ENCODE measurements at regions of chr2 and their contacts with region 1.

Region 1: DNA sequence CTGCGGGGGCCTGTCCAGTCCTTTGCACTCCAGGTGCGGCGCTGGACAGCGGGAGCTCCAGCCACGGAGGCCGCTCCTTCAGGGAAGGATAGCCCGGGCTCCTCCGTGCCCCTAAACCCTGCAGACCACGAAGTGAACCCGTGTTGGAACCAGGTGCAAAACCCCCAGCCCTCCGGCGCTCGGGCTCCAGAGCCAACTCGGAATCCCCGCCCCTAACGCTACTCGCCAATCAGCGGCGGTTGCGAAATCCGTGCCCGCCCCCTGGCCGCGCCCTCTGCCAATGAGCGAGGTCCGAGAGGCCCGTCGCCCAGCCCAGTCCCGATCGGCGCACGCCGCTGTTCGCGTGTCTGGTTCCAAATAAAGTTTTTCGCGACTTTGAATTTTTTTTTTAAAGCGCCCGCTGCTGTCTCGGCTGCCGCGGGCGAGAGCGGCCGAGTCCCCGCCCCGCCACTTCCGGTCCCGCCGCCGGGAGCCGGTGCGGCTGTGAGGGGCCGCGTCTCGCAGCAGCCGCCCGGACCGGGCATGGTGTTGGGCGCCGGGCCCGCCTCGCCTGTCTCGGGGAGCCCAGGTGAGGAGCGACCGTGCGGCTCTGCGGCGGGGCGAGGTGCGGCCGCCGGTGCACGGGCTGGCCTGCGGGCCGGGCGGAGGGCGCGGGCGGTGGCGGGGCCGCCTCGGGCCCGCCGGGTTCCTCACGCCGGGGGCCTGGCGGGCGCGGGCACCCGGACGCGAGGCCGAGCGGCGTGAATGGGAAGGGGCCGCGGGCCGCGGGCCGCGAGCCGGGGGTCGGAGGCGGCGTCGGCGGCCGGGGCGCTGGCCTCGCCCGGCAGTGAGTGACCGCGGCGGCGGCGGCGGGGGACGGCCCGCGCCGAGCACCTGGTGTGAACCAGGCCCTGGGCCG is at the start of gene UBE2F:
- DNase-seq: peak; percentile 95 to 97 (median 97)
- H3K4me3 ChIP-seq: peak within 1 kb of the TSS; percentile 58 to 77
- H3K4me3 Mint-ChIP-seq: peak within 1 kb of the TSS; percentile 84 to 92 (median 87)
- H3K27ac ChIP-seq: peak within 1 kb of the TSS; percentile 61
- H3K27ac Mint-ChIP-seq: peak within 1 kb of the TSS; percentile 81 to 96 (median 91)
- H3K4me1 ChIP-seq: peaks cover 40% of the 10 kb centered on the region
- H3K4me1 Mint-ChIP-seq: peaks cover 32 to 52% (median 42%) of the 10 kb centered on the region in 4 donors
- H3K27me3 ChIP-seq: no peaks in the 10 kb centered on the region
- H3K27me3 Mint-ChIP-seq: no peaks in the 10 kb centered on the region
- total RNA-seq, gene UBE2F: 35.7 to 39.3 TPM

Region 2: GRCh38 chr2:237858294-237859081 is 108.3 kb before region 1 on chr2:
- CTCF ChIA-PET with region 1: no interaction called
- POLR2A ChIA-PET with region 1: no interaction called
- intact Hi-C with region 1: loop called (anchors 5 kb)
- DNase-seq: peak in 4 of 5 donors; percentile 35 to 43 (median 40)
- H3K4me3 ChIP-seq: no peak overlapping the region
- H3K4me3 Mint-ChIP-seq: peak overlapping the region; percentile 62 to 87 (median 70)
- H3K27ac ChIP-seq: no peak overlapping the region
- H3K27ac Mint-ChIP-seq: peak overlapping the region in 1 of 7 donors; percentile 42
- H3K4me1 ChIP-seq: peaks cover 14% of the 10 kb centered on the region
- H3K4me1 Mint-ChIP-seq: peaks cover 5 to 15% (median 6%) of the 10 kb centered on the region in 4 donors
- H3K27me3 ChIP-seq: peaks cover 7% of the 10 kb centered on the region
- H3K27me3 Mint-ChIP-seq: peaks cover 18 to 21% of the 10 kb centered on the region in 2 donors

Region 3: DNA sequence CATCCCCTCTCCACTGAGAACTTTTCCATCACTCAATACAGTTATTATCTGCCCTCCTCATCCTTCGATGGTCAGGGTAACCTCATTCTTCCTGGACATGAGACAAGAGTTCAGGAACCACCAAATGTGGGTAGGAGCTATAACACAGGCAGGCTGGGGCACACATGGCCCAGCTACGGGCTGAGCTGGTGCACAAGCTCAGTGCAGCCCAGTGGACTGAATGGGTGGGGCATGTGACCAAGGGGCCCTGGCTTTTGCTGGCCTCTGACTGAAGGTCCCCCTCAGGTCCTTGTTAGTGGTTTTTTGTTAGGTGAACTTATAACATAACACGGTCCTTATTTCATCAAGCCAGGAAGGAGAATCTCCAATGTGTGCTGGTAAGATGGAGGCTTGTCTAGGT is 36.2 kb before region 1 on chr2:
- CTCF ChIA-PET with region 1: no interaction called
- POLR2A ChIA-PET with region 1: no interaction called
- intact Hi-C with region 1: no loop called
- DNase-seq: no peak
- H3K4me3 ChIP-seq: no peak overlapping the region
- H3K4me3 Mint-ChIP-seq: peak overlapping the region in 1 of 8 donors; percentile 25
- H3K27ac ChIP-seq: no peak overlapping the region
- H3K27ac Mint-ChIP-seq: no peak overlapping the region
- H3K4me1 ChIP-seq: peaks cover 8% of the 10 kb centered on the region
- H3K4me1 Mint-ChIP-seq: peaks cover 10 to 20% (median 13%) of the 10 kb centered on the region in 4 donors
- H3K27me3 ChIP-seq: no peaks in the 10 kb centered on the region
- H3K27me3 Mint-ChIP-seq: no peaks in the 10 kb centered on the region

Region 4: GRCh38 chr2:237943395-237944094 is 23.3 kb before region 1 on chr2:
- CTCF ChIA-PET with region 1: interaction called, 3 read pairs
- POLR2A ChIA-PET with region 1: interaction called, 16 read pairs
- intact Hi-C with region 1: no loop called
- DNase-seq: no peak
- H3K4me3 ChIP-seq: no peak overlapping the region
- H3K4me3 Mint-ChIP-seq: peak overlapping the region in 5 of 8 donors; percentile 20 to 82 (median 73)
- H3K27ac ChIP-seq: no peak overlapping the region
- H3K27ac Mint-ChIP-seq: peak overlapping the region in 6 of 7 donors; percentile 41 to 96 (median 91)
- H3K4me1 ChIP-seq: peaks cover 74% of the 10 kb centered on the region
- H3K4me1 Mint-ChIP-seq: peaks cover 51 to 85% (median 69%) of the 10 kb centered on the region in 4 donors
- H3K27me3 ChIP-seq: no peaks in the 10 kb centered on the region
- H3K27me3 Mint-ChIP-seq: no peaks in the 10 kb centered on the region

Region 5: GRCh38 chr2:238060542-238061314 is 93.9 kb after region 1 on chr2 and contains the start of gene SCLY:
- CTCF ChIA-PET with region 1: interaction called, 4 read pairs
- POLR2A ChIA-PET with region 1: interaction called, 5 read pairs
- intact Hi-C with region 1: loop called (anchors 1 kb)
- DNase-seq: peak; percentile 92 to 96 (median 95)
- H3K4me3 ChIP-seq: peak within 1 kb of the TSS; percentile 76 to 95
- H3K4me3 Mint-ChIP-seq: peak within 1 kb of the TSS; percentile 85 to 97 (median 93)
- H3K27ac ChIP-seq: peak within 1 kb of the TSS; percentile 76
- H3K27ac Mint-ChIP-seq: peak within 1 kb of the TSS; percentile 87 to 97 (median 93)
- H3K4me1 ChIP-seq: peaks cover 35% of the 10 kb centered on the region
- H3K4me1 Mint-ChIP-seq: peaks cover 22 to 59% (median 38%) of the 10 kb centered on the region in 4 donors
- H3K27me3 ChIP-seq: no peaks in the 10 kb centered on the region
- H3K27me3 Mint-ChIP-seq: peaks cover 12 to 14% of the 10 kb centered on the region in 2 donors
- total RNA-seq, gene SCLY: 35.9 to 37.9 TPM

Region 6: GRCh38 chr2:238106686-238107524 is 140.1 kb after region 1 on chr2:
- CTCF ChIA-PET with region 1: no interaction called
- POLR2A ChIA-PET with region 1: no interaction called
- intact Hi-C with region 1: no loop called
- DNase-seq: no peak
- H3K4me3 ChIP-seq: no peak overlapping the region
- H3K4me3 Mint-ChIP-seq: no peak overlapping the region
- H3K27ac ChIP-seq: no peak overlapping the region
- H3K27ac Mint-ChIP-seq: no peak overlapping the region
- H3K4me1 ChIP-seq: no peaks in the 10 kb centered on the region
- H3K4me1 Mint-ChIP-seq: peaks cover 0 to 18% (median 1%) of the 10 kb centered on the region in 4 donors
- H3K27me3 ChIP-seq: no peaks in the 10 kb centered on the region
- H3K27me3 Mint-ChIP-seq: no peaks in the 10 kb centered on the region

Region 7: GRCh38 chr2:238231251-238231793 is 264.5 kb after region 1 on chr2:
- CTCF ChIA-PET with region 1: no interaction called
- POLR2A ChIA-PET with region 1: no interaction called
- intact Hi-C with region 1: loop called (anchors 2 kb)
- DNase-seq: peak; percentile 44 to 83 (median 78)
- H3K4me3 ChIP-seq: peak overlapping the region; percentile 20 to 55
- H3K4me3 Mint-ChIP-seq: peak overlapping the region; percentile 75 to 92 (median 80)
- H3K27ac ChIP-seq: no peak overlapping the region
- H3K27ac Mint-ChIP-seq: peak overlapping the region in 6 of 7 donors; percentile 7 to 72 (median 50)
- H3K4me1 ChIP-seq: peaks cover 16% of the 10 kb centered on the region
- H3K4me1 Mint-ChIP-seq: peaks cover 13 to 47% (median 21%) of the 10 kb centered on the region in 4 donors
- H3K27me3 ChIP-seq: peaks cover 3% of the 10 kb centered on the region
- H3K27me3 Mint-ChIP-seq: peaks cover 16 to 23% of the 10 kb centered on the region in 2 donors

Region 8: DNA sequence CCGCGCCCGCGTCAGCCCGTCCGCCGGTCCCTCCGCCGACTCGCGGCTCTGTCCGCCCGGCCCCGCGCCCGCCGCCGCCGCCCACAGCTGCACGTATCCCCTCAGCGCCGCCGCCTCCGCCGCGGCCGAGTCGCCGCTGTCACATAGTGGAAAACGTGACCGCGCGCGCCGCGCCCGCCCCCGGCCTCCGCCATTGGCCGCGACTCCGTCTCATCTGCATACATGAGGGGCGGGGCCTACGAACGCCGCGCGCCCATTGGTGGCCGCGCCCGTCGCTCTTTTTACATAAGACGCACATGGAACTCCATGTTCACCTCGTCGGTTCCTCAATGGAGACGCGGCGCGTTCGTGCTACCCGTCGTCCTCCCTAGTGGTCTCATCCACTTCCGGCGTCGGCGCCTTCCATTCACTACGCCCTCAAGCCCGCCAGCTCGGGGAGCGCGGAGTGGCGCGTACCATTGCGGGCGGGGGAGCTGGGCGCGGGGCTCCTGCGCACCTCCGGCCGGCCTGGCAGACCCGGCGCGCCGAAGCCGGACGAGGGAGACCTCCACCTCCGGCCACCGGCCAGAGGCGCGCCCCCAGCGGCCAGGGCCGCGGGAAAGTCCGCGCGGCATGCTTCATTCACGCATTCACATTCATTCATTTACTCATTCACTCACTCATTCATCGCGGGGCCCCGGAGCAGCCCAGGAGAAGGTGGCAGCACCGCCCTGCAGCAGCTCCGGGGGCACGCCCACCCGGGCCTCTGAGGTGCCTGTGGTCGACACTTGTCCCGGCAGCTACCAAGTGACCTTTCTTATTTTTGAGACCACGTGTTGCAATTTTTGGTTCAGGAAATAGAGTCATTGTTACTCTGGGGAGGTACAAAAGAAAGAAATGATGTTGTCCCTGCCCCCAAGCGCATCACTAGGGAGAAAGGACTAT is 322.1 kb after region 1 on chr2:
- CTCF ChIA-PET with region 1: no interaction called
- POLR2A ChIA-PET with region 1: no interaction called
- intact Hi-C with region 1: loop called (anchors 1 kb)
- DNase-seq: peak; percentile 97 to 99 (median 98)
- H3K4me3 ChIP-seq: peak overlapping the region; percentile 45 to 80
- H3K4me3 Mint-ChIP-seq: peak overlapping the region; percentile 83 to 95 (median 92)
- H3K27ac ChIP-seq: peak overlapping the region; percentile 72
- H3K27ac Mint-ChIP-seq: peak overlapping the region; percentile 92 to 98 (median 97)
- H3K4me1 ChIP-seq: peaks cover 35% of the 10 kb centered on the region
- H3K4me1 Mint-ChIP-seq: peaks cover 17 to 52% (median 36%) of the 10 kb centered on the region in 4 donors
- H3K27me3 ChIP-seq: no peaks in the 10 kb centered on the region
- H3K27me3 Mint-ChIP-seq: no peaks in the 10 kb centered on the region